ENCODE measurements at regions of chr15 and their contacts with region 1.

Region 1: DNA sequence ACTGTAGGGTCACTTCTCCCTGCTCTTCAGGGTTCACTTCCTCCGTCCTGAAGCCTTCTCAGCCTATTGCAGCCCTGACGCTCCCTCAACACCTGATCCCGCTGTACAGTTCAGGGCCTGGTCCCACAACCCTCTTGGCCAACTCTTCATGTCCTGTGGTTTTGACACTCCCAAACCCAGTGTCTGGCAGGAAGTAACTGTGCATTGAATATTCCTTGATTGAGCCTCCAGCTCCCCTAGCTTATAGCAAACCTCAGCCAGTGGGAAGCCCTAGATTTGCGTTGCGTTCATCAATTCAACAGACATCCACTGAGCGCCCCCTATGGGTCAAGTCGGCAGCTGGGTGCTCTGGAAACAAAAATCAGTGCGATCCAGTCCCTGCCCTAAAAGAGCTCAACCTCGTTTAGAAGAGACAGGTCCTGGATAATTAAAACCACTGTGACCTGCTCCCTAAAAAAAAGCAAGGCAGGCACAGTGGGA is 13.5 kb downstream of the UBAP1L start:
- DNase-seq: peak; percentile 50
- ATAC-seq: peak; percentile 76
- H3K4me3 ChIP-seq: no peak overlapping the region
- H3K27ac ChIP-seq: no peak overlapping the region
- H3K4me1 ChIP-seq: no peaks in the 10 kb centered on the region
- H3K27me3 ChIP-seq: no peaks in the 10 kb centered on the region
- CTCF ChIP-seq: peak; percentile 88
- EP300 ChIP-seq: no peak
- POLR2A ChIP-seq: no peak
- RAD21 ChIP-seq: peak; percentile 88

Region 2: GRCh38 chr15:65086017-65086679 is 15.3 kb before region 1 on chr15:
- CTCF ChIA-PET with region 1: interaction called, 10 read pairs
- POLR2A ChIA-PET with region 1: no interaction called
- in situ Hi-C with region 1: no loop called
- intact Hi-C with region 1: no loop called
- DNase-seq: peak; percentile 72
- ATAC-seq: peak; percentile 76
- H3K4me3 ChIP-seq: no peak overlapping the region; a peak in 1 of 6 replicates
- H3K27ac ChIP-seq: no peak overlapping the region
- H3K4me1 ChIP-seq: peaks cover 96% of the 10 kb centered on the region
- H3K27me3 ChIP-seq: peaks cover 0 to 21% of the 10 kb centered on the region in 2 experiments; a peak in 2 of 5 replicates
- CTCF ChIP-seq: peak; percentile 88
- EP300 ChIP-seq: no peak
- POLR2A ChIP-seq: no peak
- RAD21 ChIP-seq: peak; percentile 60

Region 3: GRCh38 chr15:65184868-65185738 is 83.7 kb after region 1 on chr15 and contains the start of gene CLPX:
- CTCF ChIA-PET with region 1: no interaction called
- POLR2A ChIA-PET with region 1: no interaction called
- in situ Hi-C with region 1: no loop called
- intact Hi-C with region 1: no loop called
- DNase-seq: peak; percentile 96
- ATAC-seq: peak; percentile 89
- H3K4me3 ChIP-seq: peak within 1 kb of the TSS; percentile 81 to 97 (median 90)
- H3K27ac ChIP-seq: peak within 1 kb of the TSS; percentile 92
- H3K4me1 ChIP-seq: peaks cover 53% of the 10 kb centered on the region
- H3K27me3 ChIP-seq: no peaks in the 10 kb centered on the region; a peak in 1 of 5 replicates
- CTCF ChIP-seq: no peak
- EP300 ChIP-seq: peak; percentile 23 to 41; a peak in 1 of 4 replicates
- POLR2A ChIP-seq: peak; percentile 80 to 89
- RAD21 ChIP-seq: no peak
- total RNA-seq, gene CLPX: 61.3 and 100 TPM in 2 replicates

Measured in HepG2 (cell line).